Panc1 (cell line): ENCODE measurements at regions of chr19 and their contacts with region 1.

Region 1: GRCh38 chr19:39412100-39412866 is at the start of gene PLEKHG2:
- DNase-seq: peak; percentile 100
- ATAC-seq: peak; percentile 67
- H3K4me3 ChIP-seq: peak within 1 kb of the TSS; percentile 42 to 55
- H3K27ac ChIP-seq: peak within 1 kb of the TSS; percentile 92
- H3K4me1 ChIP-seq: peaks cover 58% of the 10 kb centered on the region
- H3K27me3 ChIP-seq: no peaks in the 10 kb centered on the region
- CTCF ChIP-seq: no peak
- total RNA-seq, gene PLEKHG2: 1,988 TPM

Region 2: DNA sequence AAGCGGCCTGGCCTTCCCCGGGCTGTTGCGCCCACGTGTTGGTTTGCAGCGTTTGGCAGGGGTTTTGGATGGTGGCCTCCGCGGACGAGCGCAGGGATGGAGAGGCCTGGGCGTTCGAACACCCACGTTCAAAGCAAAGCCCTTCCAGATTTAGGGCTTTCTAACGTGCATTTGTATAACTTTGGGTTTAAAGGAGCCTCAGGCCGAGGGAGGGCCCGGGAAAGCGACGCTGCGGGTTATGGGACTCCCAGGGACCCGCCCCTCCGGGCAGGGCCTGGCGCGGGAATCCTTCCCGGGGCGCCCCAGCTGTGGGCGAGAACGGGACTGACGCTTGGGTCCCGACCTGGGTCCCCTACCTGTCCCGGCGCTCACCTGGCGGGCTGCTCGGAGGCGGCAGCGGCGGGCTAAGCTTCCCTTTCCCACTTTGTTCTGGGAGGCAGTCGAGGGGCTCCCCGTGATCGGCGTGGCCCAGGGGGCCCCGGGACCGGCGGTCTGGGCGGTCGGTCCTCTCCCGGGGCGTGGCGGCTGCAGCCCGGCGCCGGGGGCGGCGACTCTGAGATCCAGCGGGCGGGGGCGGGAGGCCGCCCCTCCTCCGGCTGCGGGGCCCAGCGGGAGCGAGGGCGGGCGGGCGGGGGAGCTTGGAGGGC is 436.9 kb before region 1 on chr19 and contains the start of gene FBXO17:
- CTCF ChIA-PET with region 1: no interaction called
- POLR2A ChIA-PET with region 1: interaction called, 4 read pairs
- in situ Hi-C with region 1: no loop called
- intact Hi-C with region 1: loop called (anchors 10 kb)
- DNase-seq: peak; percentile 81
- ATAC-seq: peak; percentile 89
- H3K4me3 ChIP-seq: peak within 1 kb of the TSS; percentile 50 to 59
- H3K27ac ChIP-seq: peak within 1 kb of the TSS; percentile 97
- H3K4me1 ChIP-seq: peaks cover 48% of the 10 kb centered on the region
- H3K27me3 ChIP-seq: no peaks in the 10 kb centered on the region
- CTCF ChIP-seq: no peak
- total RNA-seq, gene FBXO17: 411 TPM

Region 3: GRCh38 chr19:39156326-39157230 is 255.7 kb before region 1 on chr19:
- CTCF ChIA-PET with region 1: no interaction called
- POLR2A ChIA-PET with region 1: interaction called, 10 read pairs
- in situ Hi-C with region 1: no loop called
- intact Hi-C with region 1: no loop called
- DNase-seq: no peak
- ATAC-seq: no peak
- H3K4me3 ChIP-seq: no peak overlapping the region
- H3K27ac ChIP-seq: no peak overlapping the region
- H3K4me1 ChIP-seq: peaks cover 66% of the 10 kb centered on the region
- H3K27me3 ChIP-seq: no peaks in the 10 kb centered on the region
- CTCF ChIP-seq: no peak

Region 4: GRCh38 chr19:39328046-39328705 is 84.1 kb before region 1 on chr19:
- CTCF ChIA-PET with region 1: interaction called, 9 read pairs
- POLR2A ChIA-PET with region 1: interaction called, 16 read pairs
- in situ Hi-C with region 1: no loop called
- intact Hi-C with region 1: loop called (anchors 2 kb)
- DNase-seq: peak; percentile 97
- ATAC-seq: peak; percentile 84
- H3K4me3 ChIP-seq: no peak overlapping the region
- H3K27ac ChIP-seq: peak overlapping the region; percentile 2
- H3K4me1 ChIP-seq: peaks cover 7% of the 10 kb centered on the region; the same call in 1 of the 2 replicates
- H3K27me3 ChIP-seq: no peaks in the 10 kb centered on the region
- CTCF ChIP-seq: no peak

Region 5: GRCh38 chr19:39397360-39398296 is 14.7 kb before region 1 on chr19:
- CTCF ChIA-PET with region 1: interaction called, 280 read pairs
- POLR2A ChIA-PET with region 1: interaction called, 145 read pairs
- in situ Hi-C with region 1: no loop called
- intact Hi-C with region 1: loop called (anchors 1 kb)
- DNase-seq: peak; percentile 100
- ATAC-seq: peak; percentile 78
- H3K4me3 ChIP-seq: no peak overlapping the region
- H3K27ac ChIP-seq: peak overlapping the region; percentile 75
- H3K4me1 ChIP-seq: peaks cover 51% of the 10 kb centered on the region
- H3K27me3 ChIP-seq: no peaks in the 10 kb centered on the region
- CTCF ChIP-seq: no peak

Region 6: DNA sequence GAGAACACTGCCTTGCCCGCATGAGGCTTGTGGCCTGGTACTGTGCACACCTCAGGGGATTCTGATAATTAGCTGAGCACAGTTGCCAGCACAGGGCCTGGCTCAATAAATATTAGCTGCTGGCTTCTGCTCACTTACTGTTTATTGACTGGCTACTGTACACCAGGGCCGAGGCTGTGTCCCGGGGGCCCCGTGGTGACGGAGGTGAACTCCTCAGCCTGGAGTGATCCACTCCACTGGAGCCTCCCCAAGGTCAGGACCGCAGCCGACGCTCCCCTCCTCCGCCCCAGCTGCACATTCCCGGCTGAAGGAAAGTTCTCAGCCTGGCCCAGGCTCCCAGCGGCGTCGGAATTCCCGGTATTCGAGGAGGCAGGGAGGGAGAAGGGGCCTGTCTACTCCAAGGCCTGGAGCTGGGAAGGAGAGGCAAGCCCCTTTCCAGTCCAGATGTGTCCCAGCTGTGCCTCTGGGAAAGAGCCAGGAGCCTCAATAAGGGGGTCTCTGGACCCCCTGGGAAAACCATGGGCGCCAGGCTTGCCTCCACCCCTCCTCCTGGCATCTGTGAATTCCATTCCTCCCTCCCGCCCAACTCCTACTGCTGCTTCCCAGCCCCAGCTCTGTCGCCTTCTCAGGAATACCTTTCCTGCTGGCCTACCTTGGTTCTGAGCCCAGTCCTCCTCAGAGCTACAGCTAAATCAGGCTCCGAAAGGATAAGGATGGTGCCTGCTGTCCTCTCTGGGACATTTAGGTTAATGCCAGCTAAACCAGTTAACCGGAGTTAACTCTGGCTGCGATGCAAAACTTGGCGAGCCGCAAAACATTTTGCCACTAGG is 16.2 kb after region 1 on chr19:
- CTCF ChIA-PET with region 1: interaction called, 147 read pairs
- POLR2A ChIA-PET with region 1: interaction called, 524 read pairs
- in situ Hi-C with region 1: no loop called
- intact Hi-C with region 1: loop called (anchors 1 kb)
- DNase-seq: peak; percentile 92
- ATAC-seq: peak; percentile 70
- H3K4me3 ChIP-seq: peak overlapping the region; percentile 0 to 17; a peak in 3 of 4 replicates
- H3K27ac ChIP-seq: peak overlapping the region; percentile 86
- H3K4me1 ChIP-seq: peaks cover 75% of the 10 kb centered on the region
- H3K27me3 ChIP-seq: no peaks in the 10 kb centered on the region
- CTCF ChIP-seq: no peak

Region 7: GRCh38 chr19:40266119-40266518 is 853.8 kb after region 1 on chr19:
- CTCF ChIA-PET with region 1: no interaction called
- POLR2A ChIA-PET with region 1: interaction called, 15 read pairs
- in situ Hi-C with region 1: no loop called
- intact Hi-C with region 1: no loop called
- DNase-seq: no peak
- ATAC-seq: no peak
- H3K4me3 ChIP-seq: no peak overlapping the region
- H3K27ac ChIP-seq: no peak overlapping the region
- H3K4me1 ChIP-seq: no peaks in the 10 kb centered on the region
- H3K27me3 ChIP-seq: no peaks in the 10 kb centered on the region
- CTCF ChIP-seq: no peak